Posterior vena cava (tissue), 2 donors: ENCODE measurements at regions of chr5 and their contacts with region 1.

Region 1: DNA sequence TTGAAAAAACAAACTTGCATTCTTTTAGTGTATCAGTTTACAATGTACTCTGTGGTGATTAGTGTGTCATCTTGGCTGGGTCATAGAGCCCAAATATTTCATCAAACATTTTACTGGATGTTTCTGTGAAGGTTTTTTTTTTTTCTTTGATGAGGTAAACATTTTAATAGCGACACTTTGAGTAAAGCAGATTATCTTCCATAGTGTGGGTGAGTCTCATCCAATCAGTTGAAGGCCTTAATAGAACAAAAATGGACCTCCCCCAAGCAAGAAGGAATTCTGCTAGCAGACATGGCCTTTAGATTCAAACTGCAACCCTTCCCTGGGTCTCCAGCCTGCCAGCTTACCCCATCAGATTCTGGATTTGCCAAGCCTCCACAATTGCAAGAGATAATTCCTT is 72.5 kb downstream of the FSTL4 start:
- DNase-seq: no peak

Region 2: GRCh38 chr5:133497608-133498348 is 42.0 kb before region 1 on chr5:
- intact Hi-C with region 1: loop called in 1 of 2 experiments (anchors 2 kb)
- DNase-seq: no peak

Region 3: DNA sequence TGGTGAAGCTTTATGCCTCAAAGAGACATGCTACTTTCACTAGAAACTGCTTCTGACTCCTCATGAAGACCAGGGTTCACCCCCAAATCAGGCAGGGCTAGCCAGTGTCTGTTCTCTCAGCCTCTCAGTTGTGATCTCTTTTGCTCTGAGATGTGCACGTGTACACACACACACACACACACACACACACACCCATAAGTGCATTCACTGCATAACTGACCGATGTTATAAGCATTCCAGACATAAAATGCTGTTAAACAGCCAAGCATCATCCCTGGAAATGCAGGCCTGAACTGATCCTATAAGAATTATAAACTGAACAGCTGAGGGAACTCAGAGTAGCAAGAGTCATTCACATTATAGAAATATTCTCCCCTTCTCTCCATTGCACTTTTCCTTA is 12.5 kb before region 1 on chr5:
- intact Hi-C with region 1: no loop called
- DNase-seq: no peak

Region 4: GRCh38 chr5:133581918-133582317 is 42.1 kb after region 1 on chr5:
- intact Hi-C with region 1: no loop called
- DNase-seq: no peak